Endothelial cell of umbilical vein (primary cell): ENCODE measurements at regions of chr1 and their contacts with region 1.

Region 1: GRCh38 chr1:1399187-1399871 is at the start of gene CCNL2:
- DNase-seq: peak; percentile 99
- H3K4me3 ChIP-seq: peak within 1 kb of the TSS; percentile 80 to 92 (median 90)
- H3K27ac ChIP-seq: peak within 1 kb of the TSS; percentile 54
- H3K4me1 ChIP-seq: peaks cover 22% of the 10 kb centered on the region
- H3K27me3 ChIP-seq: no peaks in the 10 kb centered on the region
- CTCF ChIP-seq: peak; percentile 63 to 78
- POLR2A ChIP-seq: peak; percentile 58
- total RNA-seq, gene CCNL2: 182 and 188 TPM in 2 replicates

Region 2: GRCh38 chr1:1273512-1274298 is 125.6 kb before region 1 on chr1 and contains the start of gene UBE2J2:
- CTCF ChIA-PET with region 1: no interaction called
- POLR2A ChIA-PET with region 1: no interaction called
- dilution Hi-C with region 1: no loop called
- intact Hi-C with region 1: no loop called
- DNase-seq: peak; percentile 84
- H3K4me3 ChIP-seq: peak within 1 kb of the TSS; percentile 47 to 72 (median 64)
- H3K27ac ChIP-seq: peak within 1 kb of the TSS; percentile 69
- H3K4me1 ChIP-seq: peaks cover 24% of the 10 kb centered on the region
- H3K27me3 ChIP-seq: no peaks in the 10 kb centered on the region
- CTCF ChIP-seq: peak in 1 of 2 donors; percentile 3
- POLR2A ChIP-seq: peak; percentile 84
- total RNA-seq, gene UBE2J2: 80.7 and 87.2 TPM in 2 replicates

Region 3: GRCh38 chr1:1419642-1420384 is 20.5 kb after region 1 on chr1:
- CTCF ChIA-PET with region 1: interaction called, 12 read pairs
- POLR2A ChIA-PET with region 1: no interaction called
- dilution Hi-C with region 1: no loop called
- intact Hi-C with region 1: no loop called
- DNase-seq: no peak
- H3K4me3 ChIP-seq: peak overlapping the region in 1 of 3 experiments; percentile 21
- H3K27ac ChIP-seq: no peak overlapping the region
- H3K4me1 ChIP-seq: peaks cover 3% of the 10 kb centered on the region
- H3K27me3 ChIP-seq: no peaks in the 10 kb centered on the region
- CTCF ChIP-seq: no peak
- POLR2A ChIP-seq: no peak

Region 4: GRCh38 chr1:1430114-1430982 is 31.0 kb after region 1 on chr1:
- CTCF ChIA-PET with region 1: interaction called, 11 read pairs
- POLR2A ChIA-PET with region 1: no interaction called
- dilution Hi-C with region 1: no loop called
- intact Hi-C with region 1: no loop called
- DNase-seq: peak; percentile 91
- H3K4me3 ChIP-seq: no peak overlapping the region
- H3K27ac ChIP-seq: peak overlapping the region; percentile 43
- H3K4me1 ChIP-seq: peaks cover 17% of the 10 kb centered on the region
- H3K27me3 ChIP-seq: no peaks in the 10 kb centered on the region
- CTCF ChIP-seq: peak; percentile 29 to 51
- POLR2A ChIP-seq: no peak

Region 5: GRCh38 chr1:1441002-1441888 is 41.9 kb after region 1 on chr1:
- CTCF ChIA-PET with region 1: interaction called, 31 read pairs
- POLR2A ChIA-PET with region 1: no interaction called
- dilution Hi-C with region 1: no loop called
- intact Hi-C with region 1: loop called (anchors 1 kb)
- DNase-seq: peak; percentile 37
- H3K4me3 ChIP-seq: no peak overlapping the region
- H3K27ac ChIP-seq: no peak overlapping the region
- H3K4me1 ChIP-seq: no peaks in the 10 kb centered on the region
- H3K27me3 ChIP-seq: no peaks in the 10 kb centered on the region
- CTCF ChIP-seq: peak; percentile 86 to 99
- POLR2A ChIP-seq: no peak

Region 6: DNA sequence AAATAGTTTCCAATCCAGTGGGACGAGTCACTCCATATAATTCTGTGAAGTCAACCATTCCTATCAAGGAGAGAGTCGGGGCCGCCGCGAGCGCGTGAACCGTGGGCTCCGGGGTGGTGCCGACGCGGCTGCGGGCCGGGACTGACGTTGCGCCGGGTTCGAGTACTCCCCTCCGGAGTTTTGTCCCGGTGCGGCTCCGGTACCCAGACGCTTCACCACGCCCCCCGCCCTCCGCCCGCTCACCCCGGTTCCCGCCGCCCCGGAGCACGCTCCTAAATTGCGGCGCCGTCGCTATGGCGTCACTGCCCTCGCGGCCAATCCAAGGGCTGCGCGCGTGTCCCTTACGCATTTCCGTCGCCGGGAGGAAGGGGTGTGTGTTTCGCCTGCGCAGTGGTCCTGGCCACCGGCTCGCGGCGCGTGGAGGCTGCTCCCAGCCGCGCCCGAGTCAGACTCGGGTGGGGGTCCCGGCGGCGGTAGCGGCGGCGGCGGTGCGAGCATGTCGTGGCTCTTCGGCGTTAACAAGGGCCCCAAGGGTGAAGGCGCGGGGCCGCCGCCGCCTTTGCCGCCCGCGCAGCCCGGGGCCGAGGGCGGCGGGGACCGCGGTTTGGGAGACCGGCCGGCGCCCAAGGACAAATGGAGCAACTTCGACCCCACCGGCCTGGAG is 72.2 kb after region 1 on chr1 and contains the start of gene ATAD3B:
- CTCF ChIA-PET with region 1: no interaction called
- POLR2A ChIA-PET with region 1: no interaction called
- dilution Hi-C with region 1: no loop called
- intact Hi-C with region 1: loop called (anchors 1 kb)
- DNase-seq: peak; percentile 92
- H3K4me3 ChIP-seq: peak within 1 kb of the TSS; percentile 76 to 98 (median 93)
- H3K27ac ChIP-seq: peak within 1 kb of the TSS; percentile 59
- H3K4me1 ChIP-seq: peaks cover 12% of the 10 kb centered on the region
- H3K27me3 ChIP-seq: no peaks in the 10 kb centered on the region
- CTCF ChIP-seq: no peak
- POLR2A ChIP-seq: peak; percentile 71
- total RNA-seq, gene ATAD3B: 45.8 and 48.2 TPM in 2 replicates